ENCODE measurements at regions of chr20 and their contacts with region 1.

Region 1: GRCh38 chr20:17892189-17892938 is 76.2 kb downstream of the SNX5 start:
- DNase-seq: no peak
- ATAC-seq: no peak
- H3K4me3 ChIP-seq: no peak overlapping the region
- H3K27ac ChIP-seq: peak overlapping the region in 2 of 12 donors; percentile 5 to 28
- H3K4me1 ChIP-seq: peaks cover 0 to 51% (median 31%) of the 10 kb centered on the region in 12 donors
- H3K27me3 ChIP-seq: no peaks in the 10 kb centered on the region
- CTCF ChIP-seq: no peak
- POLR2A ChIP-seq: no peak

Region 2: DNA sequence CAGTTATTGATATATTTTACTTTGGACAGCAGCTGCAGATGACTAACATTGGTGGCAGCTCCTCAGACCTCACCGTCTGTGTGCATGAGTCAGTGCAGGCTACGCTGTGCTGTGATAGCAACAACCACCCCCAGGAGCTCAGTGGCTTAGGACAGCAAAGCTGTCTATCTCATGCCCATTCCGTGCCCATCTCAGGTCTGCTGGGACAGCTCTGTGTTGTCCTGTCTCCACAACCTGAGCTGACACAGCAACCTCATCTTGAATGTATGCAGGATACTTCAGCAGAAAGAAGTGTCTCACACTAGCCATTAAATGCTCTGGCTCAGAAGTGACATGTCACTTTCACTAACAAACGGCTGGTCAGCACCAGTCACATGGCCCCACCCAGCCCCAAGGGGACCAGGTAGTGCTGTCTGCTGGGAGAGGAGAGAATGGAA is 144.9 kb before region 1 on chr20:
- intact Hi-C with region 1: loop called in 3 of 10 experiments (anchors 2 to 5 kb)
- DNase-seq: peak in 1 of 5 donors; percentile 64
- ATAC-seq: peak in 3 of 4 donors; percentile 23 to 84 (median 73)
- H3K4me3 ChIP-seq: no peak overlapping the region
- H3K27ac ChIP-seq: no peak overlapping the region
- H3K4me1 ChIP-seq: peaks cover 0 to 19% (median 10%) of the 10 kb centered on the region in 12 donors
- H3K27me3 ChIP-seq: no peaks in the 10 kb centered on the region
- CTCF ChIP-seq: no peak
- POLR2A ChIP-seq: no peak

Region 3: GRCh38 chr20:18055261-18055660 is 162.9 kb after region 1 on chr20:
- intact Hi-C with region 1: no loop called
- DNase-seq: no peak
- ATAC-seq: no peak
- H3K4me3 ChIP-seq: no peak overlapping the region
- H3K27ac ChIP-seq: no peak overlapping the region
- H3K4me1 ChIP-seq: peaks cover 0 to 33% (median 14%) of the 10 kb centered on the region in 12 donors
- H3K27me3 ChIP-seq: peaks cover 39 to 87% (median 60%) of the 10 kb centered on the region in 9 donors
- CTCF ChIP-seq: no peak
- POLR2A ChIP-seq: no peak

Measured in heart left ventricle (tissue), 16 donors.